ENCODE measurements at regions of chr17 and their contacts with region 1.

Region 1: DNA sequence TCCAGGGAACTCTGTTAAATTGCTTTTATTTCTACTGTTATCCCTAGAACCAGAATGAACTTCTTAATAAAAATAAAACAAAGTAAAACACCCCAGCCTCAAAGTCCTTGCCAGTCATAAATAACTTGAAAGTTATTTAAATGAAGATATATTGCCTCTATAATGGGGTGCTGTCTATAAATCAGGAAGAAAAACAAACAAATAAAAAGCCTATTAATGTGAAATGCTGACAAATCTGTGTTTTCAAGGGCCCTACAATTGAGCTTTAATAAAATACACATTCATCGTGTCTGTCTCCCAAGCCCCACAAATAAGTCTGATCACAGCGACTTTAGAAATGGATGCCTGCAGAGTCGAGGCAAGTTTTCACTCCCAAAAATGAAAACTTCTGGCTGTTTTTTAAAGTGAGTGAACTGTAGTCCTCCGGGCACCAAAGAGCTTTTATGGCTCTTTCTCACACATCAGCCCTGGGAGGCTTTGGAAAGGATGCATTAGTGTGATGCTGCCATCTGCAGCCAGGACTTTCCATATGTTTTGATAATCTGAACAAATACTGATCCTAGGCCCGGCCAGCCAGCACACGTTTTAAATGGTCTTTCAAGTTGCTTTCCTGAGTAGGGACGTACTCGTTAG is 16.4 kb downstream of the NACA2 start:
- DNase-seq: peak; percentile 76
- H3K4me3 ChIP-seq: no peak overlapping the region
- H3K27ac ChIP-seq: peak overlapping the region; percentile 7 to 56; a peak in 3 of 4 replicates
- H3K4me1 ChIP-seq: peaks cover 0 to 7% of the 10 kb centered on the region in 2 experiments; a peak in 2 of 4 replicates
- H3K27me3 ChIP-seq: no peaks in the 10 kb centered on the region
- CTCF ChIP-seq: peak; percentile 59
- EP300 ChIP-seq: no peak
- RAD21 ChIP-seq: peak; percentile 97

Region 2: DNA sequence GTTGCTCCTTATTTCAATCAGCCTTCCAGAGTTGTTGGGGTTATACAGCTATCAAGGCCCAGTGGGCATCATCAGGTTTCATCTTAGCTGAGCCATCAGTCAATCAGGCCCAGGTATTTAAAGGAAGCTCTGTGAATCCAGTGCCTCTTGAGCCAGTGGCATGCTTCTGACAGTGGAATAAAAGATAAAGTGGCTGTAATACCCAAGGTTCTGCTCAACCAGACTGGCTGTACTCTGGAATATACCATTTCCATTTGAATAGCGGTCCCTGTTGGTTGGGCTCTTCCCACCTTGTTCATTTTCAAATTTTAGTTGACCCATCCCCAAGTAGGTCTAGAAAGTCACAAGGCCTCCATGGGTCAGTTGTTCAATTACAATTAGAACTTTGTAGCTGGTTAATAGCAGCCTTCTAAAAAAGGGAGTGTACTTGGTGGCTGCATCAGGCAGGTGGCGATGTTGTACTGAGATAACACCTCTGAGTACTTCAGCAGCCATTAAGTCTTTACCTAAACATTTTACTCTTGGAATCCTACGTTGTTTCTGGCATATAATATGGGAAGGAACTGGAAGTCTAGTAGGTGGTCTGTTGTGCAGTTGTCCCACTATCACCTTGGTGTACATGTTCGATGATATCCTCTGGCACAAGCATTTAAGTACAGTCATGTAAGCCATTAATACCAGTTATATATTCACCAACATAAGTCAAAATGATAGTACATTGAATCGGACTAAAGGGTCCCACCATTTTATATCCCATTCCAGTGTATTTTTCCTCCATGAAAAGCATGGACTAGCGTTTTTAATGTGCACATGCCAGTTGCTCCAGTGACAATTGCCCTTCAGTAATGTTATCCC is 602.9 kb before region 1 on chr17:
- CTCF ChIA-PET with region 1: interaction called, 14 read pairs
- POLR2A ChIA-PET with region 1: no interaction called
- DNase-seq: peak; percentile 71
- H3K4me3 ChIP-seq: peak overlapping the region in 1 of 2 experiments; percentile 8; a peak in 1 of 4 replicates
- H3K27ac ChIP-seq: no peak overlapping the region
- H3K4me1 ChIP-seq: no peaks in the 10 kb centered on the region
- H3K27me3 ChIP-seq: no peaks in the 10 kb centered on the region
- CTCF ChIP-seq: peak; percentile 79
- EP300 ChIP-seq: no peak
- RAD21 ChIP-seq: peak; percentile 97

Region 3: DNA sequence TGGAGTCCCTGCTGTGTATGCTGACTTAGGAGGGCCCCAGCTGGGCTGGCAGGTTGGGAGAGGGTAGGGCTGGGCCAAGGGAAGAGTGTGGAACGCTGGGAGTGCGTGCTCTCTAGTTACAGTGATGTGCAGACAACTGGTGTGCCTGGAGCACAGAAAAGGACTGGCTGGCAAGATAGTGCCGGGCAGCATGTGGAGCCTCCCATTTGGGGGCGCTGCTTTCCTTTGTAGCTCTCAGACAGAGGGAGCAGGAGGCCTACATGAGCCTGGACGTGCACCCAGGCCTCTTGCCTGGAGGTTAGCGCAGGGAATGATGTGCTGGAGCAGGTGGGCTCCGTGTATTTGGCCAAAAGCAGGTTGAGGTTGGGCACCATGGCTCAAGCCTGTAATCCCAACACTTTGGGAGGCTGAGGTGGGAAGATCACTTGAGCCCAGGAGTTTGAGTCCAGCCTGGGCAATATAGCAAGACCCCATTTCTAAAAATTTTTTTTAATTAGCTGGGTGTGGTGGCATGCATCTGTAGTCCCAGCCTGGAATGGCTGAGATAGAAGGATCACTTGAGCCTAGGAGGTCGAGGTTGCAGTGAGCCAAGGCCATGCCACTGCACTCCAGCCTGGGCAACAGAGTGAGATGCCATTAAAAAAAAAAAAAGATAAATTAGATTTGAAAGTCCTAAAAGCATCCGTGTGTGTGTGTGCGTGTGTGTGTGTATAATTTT is 148.5 kb before region 1 on chr17:
- CTCF ChIA-PET with region 1: interaction called, 318 read pairs
- POLR2A ChIA-PET with region 1: no interaction called
- DNase-seq: peak; percentile 42
- H3K4me3 ChIP-seq: no peak overlapping the region
- H3K27ac ChIP-seq: no peak overlapping the region; a peak in 1 of 4 replicates
- H3K4me1 ChIP-seq: peaks cover 0 to 4% of the 10 kb centered on the region in 2 experiments; a peak in 1 of 4 replicates
- H3K27me3 ChIP-seq: no peaks in the 10 kb centered on the region
- CTCF ChIP-seq: no peak; the same call in 1 of the 2 replicates
- EP300 ChIP-seq: no peak
- RAD21 ChIP-seq: peak; percentile 63

Region 4: DNA sequence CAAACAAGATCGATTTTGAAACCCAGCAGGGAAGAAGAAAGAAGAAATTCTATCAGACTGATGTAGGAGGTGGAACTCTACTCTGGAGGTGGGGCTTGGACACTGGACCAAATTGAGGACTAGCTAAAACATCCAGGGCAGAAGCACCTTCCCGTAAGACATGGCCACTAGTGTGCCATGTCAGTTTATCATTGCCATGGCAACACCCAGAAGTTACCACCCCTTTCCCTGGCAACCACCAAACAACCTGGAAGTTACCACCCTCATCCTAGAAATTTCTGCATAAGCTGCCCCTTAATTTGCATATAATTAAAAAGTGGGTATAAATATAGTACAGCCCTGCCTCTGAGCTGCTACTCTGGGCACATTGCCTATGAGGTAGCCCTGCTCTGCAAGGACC is 50.3 kb before region 1 on chr17:
- CTCF ChIA-PET with region 1: no interaction called
- POLR2A ChIA-PET with region 1: no interaction called
- DNase-seq: no peak
- H3K4me3 ChIP-seq: no peak overlapping the region
- H3K27ac ChIP-seq: no peak overlapping the region
- H3K4me1 ChIP-seq: no peaks in the 10 kb centered on the region
- H3K27me3 ChIP-seq: no peaks in the 10 kb centered on the region; the same call in 1 of the 2 replicates
- CTCF ChIP-seq: no peak
- EP300 ChIP-seq: no peak
- RAD21 ChIP-seq: no peak

Region 5: DNA sequence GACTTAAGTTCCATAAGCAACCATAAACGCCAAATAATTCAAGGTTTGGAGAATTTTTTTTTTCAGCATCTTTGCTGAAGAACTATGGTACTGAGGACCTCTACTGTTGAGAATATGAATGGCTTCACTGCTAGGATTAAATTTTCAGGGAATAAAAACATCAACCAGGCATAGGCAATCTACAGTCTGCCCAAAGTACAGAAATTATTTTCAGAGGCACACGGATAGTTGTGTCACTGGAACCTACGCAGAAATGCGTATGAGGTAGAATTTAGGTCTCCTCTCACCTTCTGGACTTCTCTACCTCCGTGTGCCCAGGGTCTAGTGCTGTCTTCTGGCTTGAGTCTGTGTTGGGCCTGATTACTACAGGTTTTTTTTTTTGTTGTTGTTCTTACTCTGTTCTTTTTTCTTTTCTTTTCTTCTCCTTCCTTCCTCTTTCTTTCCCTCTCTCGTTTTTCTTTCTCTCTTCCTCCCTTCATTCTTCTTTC is 23.4 kb before region 1 on chr17:
- CTCF ChIA-PET with region 1: interaction called, 25 read pairs
- POLR2A ChIA-PET with region 1: no interaction called
- DNase-seq: peak; percentile 75
- H3K4me3 ChIP-seq: no peak overlapping the region; a peak in 1 of 4 replicates
- H3K27ac ChIP-seq: no peak overlapping the region; a peak in 1 of 4 replicates
- H3K4me1 ChIP-seq: peaks cover 10 to 16% of the 10 kb centered on the region in 2 experiments; a peak in 3 of 4 replicates
- H3K27me3 ChIP-seq: no peaks in the 10 kb centered on the region
- CTCF ChIP-seq: peak; percentile 98
- EP300 ChIP-seq: no peak; a peak in 1 of 4 replicates
- RAD21 ChIP-seq: peak; percentile 97

Region 6: DNA sequence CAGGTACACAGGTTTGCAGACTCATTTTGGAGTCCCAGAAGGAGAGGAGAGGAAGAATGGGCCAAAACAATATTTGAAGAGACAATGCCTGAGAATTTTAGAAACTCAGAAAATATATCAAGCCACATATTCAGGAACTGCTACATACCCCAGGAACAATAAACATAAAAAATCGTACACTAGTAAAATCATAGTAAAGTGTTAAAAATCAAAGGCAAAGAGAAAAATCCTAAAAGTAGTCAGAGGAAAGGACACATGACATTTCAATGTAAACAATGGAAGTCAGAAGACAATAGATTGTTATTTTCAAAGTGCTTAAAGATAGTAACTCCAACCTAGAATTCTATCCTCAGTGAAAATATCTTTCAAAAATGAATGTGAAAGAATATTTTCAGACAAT is 44.8 kb after region 1 on chr17:
- CTCF ChIA-PET with region 1: no interaction called
- POLR2A ChIA-PET with region 1: no interaction called
- DNase-seq: no peak
- H3K4me3 ChIP-seq: no peak overlapping the region
- H3K27ac ChIP-seq: no peak overlapping the region
- H3K4me1 ChIP-seq: no peaks in the 10 kb centered on the region; a peak in 2 of 4 replicates
- H3K27me3 ChIP-seq: no peaks in the 10 kb centered on the region
- CTCF ChIP-seq: no peak
- EP300 ChIP-seq: no peak
- RAD21 ChIP-seq: no peak

Region 7: GRCh38 chr17:61702450-61702849 is 127.8 kb after region 1 on chr17:
- CTCF ChIA-PET with region 1: no interaction called
- POLR2A ChIA-PET with region 1: no interaction called
- DNase-seq: no peak
- H3K4me3 ChIP-seq: no peak overlapping the region
- H3K27ac ChIP-seq: no peak overlapping the region
- H3K4me1 ChIP-seq: no peaks in the 10 kb centered on the region
- H3K27me3 ChIP-seq: no peaks in the 10 kb centered on the region
- CTCF ChIP-seq: no peak
- EP300 ChIP-seq: no peak
- RAD21 ChIP-seq: no peak

Region 8: GRCh38 chr17:61837175-61838051 is 262.8 kb after region 1 on chr17:
- CTCF ChIA-PET with region 1: interaction called, 14 read pairs
- POLR2A ChIA-PET with region 1: no interaction called
- DNase-seq: peak; percentile 59
- H3K4me3 ChIP-seq: no peak overlapping the region
- H3K27ac ChIP-seq: no peak overlapping the region; a peak in 1 of 4 replicates
- H3K4me1 ChIP-seq: peaks cover 0 to 3% of the 10 kb centered on the region in 2 experiments; a peak in 2 of 4 replicates
- H3K27me3 ChIP-seq: no peaks in the 10 kb centered on the region
- CTCF ChIP-seq: peak; percentile 95
- EP300 ChIP-seq: no peak
- RAD21 ChIP-seq: peak; percentile 97

Measured in SK-N-SH (cell line).